Mammary epithelial cell (primary cell): ENCODE measurements at regions of chr2 and their contacts with region 1.

Region 1: GRCh38 chr2:222903234-222904220 is 42.7 kb downstream of the ACSL3 start:
- DNase-seq: peak; percentile 37
- H3K4me3 ChIP-seq: no peak overlapping the region
- H3K27ac ChIP-seq: no peak overlapping the region
- H3K4me1 ChIP-seq: peaks cover 44% of the 10 kb centered on the region
- H3K27me3 ChIP-seq: no peaks in the 10 kb centered on the region
- CTCF ChIP-seq: peak; percentile 67 to 68

Region 2: DNA sequence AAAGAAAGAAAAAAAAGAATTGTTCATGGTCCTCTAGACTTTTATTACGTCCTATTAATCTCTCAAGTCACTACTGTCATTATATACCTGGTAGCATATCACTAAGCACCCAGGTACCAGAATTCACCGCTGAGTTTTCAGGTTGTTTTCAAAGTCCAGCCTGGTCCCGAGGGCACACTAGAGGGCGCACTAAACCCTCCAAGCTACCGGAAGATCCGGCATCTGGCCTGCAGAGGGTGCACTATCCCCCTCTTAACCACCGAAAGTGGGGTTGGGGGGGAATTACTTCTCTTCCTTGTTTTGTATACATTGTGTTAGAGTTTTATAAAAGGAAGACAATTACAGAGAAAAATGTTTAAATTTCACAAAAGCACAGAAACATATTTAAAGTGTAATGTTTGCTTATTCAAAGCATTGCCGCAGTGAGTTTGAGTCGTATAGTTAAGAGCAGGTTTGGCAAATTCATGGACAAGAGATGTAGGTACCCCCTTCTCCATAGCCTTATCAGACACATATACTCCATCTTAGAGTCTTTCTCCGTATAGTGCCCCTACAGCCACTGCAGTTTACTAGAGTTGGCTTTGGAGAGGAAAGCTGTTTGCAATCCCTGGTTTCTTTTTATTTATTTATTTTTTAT is 212.8 kb before region 1 on chr2:
- CTCF ChIA-PET with region 1: no interaction called
- dilution Hi-C with region 1: loop called (anchors 5 kb)
- in situ Hi-C with region 1: loop called (anchors 5 to 10 kb)
- intact Hi-C with region 1: loop called (anchors 1 kb)
- DNase-seq: peak; percentile 45
- H3K4me3 ChIP-seq: no peak overlapping the region
- H3K27ac ChIP-seq: no peak overlapping the region
- H3K4me1 ChIP-seq: no peaks in the 10 kb centered on the region
- H3K27me3 ChIP-seq: no peaks in the 10 kb centered on the region
- CTCF ChIP-seq: peak; percentile 100

Region 3: DNA sequence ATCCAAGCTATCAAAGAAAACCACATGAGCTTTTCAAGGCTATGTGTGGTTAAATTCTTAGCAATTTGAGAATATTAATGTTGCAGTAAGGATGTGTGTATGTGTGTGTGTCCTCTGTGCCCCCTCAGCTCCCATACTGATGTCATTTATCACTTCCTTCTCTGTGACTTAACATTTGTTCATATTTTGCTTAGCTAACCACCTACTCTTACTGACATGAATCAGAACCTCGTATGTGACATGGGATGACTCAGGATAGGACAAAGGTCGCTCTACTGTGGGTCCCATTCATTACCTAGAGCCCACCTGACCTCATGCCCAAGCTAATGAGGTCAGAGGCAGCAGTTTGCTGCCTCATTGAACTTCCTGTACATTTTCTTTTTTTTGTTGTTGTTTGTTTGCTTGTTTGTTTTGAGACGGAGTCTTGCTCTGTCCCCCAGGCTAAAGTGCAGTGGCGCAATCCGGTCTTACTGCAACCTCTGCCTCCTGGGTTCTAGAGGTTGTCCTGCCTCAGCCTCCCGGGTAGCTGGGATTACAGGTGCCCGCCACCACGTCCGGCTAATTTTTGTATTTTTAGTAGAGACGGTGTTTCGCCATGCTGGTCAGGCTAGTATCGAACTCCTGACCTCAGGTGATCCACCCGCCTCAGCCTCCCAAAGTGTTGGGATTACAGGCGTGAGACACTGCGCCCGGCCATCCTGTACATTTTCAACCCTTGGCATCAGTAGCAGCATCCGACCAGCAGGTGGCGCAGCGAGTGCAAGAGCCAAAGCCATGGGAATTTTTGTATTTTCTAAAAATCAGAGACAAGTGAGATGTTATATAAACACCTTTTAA is 195.6 kb before region 1 on chr2:
- CTCF ChIA-PET with region 1: no interaction called
- dilution Hi-C with region 1: no loop called
- in situ Hi-C with region 1: no loop called
- intact Hi-C with region 1: loop called (anchors 1 kb)
- DNase-seq: peak; percentile 68
- H3K4me3 ChIP-seq: no peak overlapping the region
- H3K27ac ChIP-seq: no peak overlapping the region
- H3K4me1 ChIP-seq: peaks cover 8% of the 10 kb centered on the region
- H3K27me3 ChIP-seq: no peaks in the 10 kb centered on the region
- CTCF ChIP-seq: peak; percentile 83 to 91

Region 4: GRCh38 chr2:222797261-222797660 is 106.3 kb before region 1 on chr2:
- CTCF ChIA-PET with region 1: no interaction called
- dilution Hi-C with region 1: no loop called
- in situ Hi-C with region 1: no loop called
- intact Hi-C with region 1: loop called (anchors 1 kb)
- DNase-seq: no peak
- H3K4me3 ChIP-seq: no peak overlapping the region
- H3K27ac ChIP-seq: no peak overlapping the region
- H3K4me1 ChIP-seq: no peaks in the 10 kb centered on the region
- H3K27me3 ChIP-seq: no peaks in the 10 kb centered on the region
- CTCF ChIP-seq: peak; percentile 66 to 69

Region 5: GRCh38 chr2:222805541-222806304 is 97.8 kb before region 1 on chr2:
- CTCF ChIA-PET with region 1: interaction called, 4 read pairs
- dilution Hi-C with region 1: no loop called
- in situ Hi-C with region 1: no loop called
- intact Hi-C with region 1: loop called (anchors 2 kb)
- DNase-seq: peak; percentile 68
- H3K4me3 ChIP-seq: no peak overlapping the region
- H3K27ac ChIP-seq: peak overlapping the region; percentile 72
- H3K4me1 ChIP-seq: peaks cover 31% of the 10 kb centered on the region
- H3K27me3 ChIP-seq: no peaks in the 10 kb centered on the region
- CTCF ChIP-seq: no peak

Region 6: DNA sequence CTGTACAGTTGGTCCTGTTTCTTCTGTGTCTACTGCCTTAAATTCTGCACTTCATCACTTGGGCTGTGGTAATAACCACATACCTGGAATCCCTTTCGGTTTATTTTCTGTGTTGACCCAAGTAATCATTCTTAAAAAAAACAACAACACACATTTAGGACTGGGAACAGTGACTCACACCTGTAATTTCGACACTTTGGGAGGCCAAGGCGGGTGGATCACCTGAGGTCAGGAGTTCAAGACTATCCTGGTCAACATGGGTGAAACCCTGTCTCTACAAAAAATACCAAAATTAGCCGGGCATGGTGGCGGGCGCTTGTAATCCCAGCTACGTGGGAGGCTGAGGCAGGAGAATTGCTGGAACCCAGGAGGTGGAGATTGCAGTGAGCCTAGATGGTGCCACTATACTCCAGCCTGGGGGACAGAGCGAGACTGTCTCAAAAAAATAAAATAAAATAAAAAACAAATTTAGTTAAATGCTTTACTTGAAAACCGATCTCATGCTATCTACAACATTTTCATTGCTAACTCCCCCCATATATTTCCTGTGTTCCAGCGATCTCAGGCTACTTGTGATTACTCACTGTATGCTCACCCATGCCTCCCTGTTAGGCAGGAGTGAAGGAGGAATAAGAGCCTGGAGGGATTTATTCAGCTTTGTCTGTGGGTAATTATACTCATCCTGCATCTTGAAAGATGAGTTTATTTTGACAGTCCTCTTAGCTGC is 24.5 kb before region 1 on chr2:
- CTCF ChIA-PET with region 1: no interaction called
- dilution Hi-C with region 1: no loop called
- in situ Hi-C with region 1: no loop called
- intact Hi-C with region 1: loop called (anchors 2 kb)
- DNase-seq: peak; percentile 86
- H3K4me3 ChIP-seq: no peak overlapping the region
- H3K27ac ChIP-seq: peak overlapping the region; percentile 66
- H3K4me1 ChIP-seq: peaks cover 42% of the 10 kb centered on the region
- H3K27me3 ChIP-seq: no peaks in the 10 kb centered on the region
- CTCF ChIP-seq: no peak